ENCODE measurements at regions of chr12 and their contacts with region 1.

Region 1: DNA sequence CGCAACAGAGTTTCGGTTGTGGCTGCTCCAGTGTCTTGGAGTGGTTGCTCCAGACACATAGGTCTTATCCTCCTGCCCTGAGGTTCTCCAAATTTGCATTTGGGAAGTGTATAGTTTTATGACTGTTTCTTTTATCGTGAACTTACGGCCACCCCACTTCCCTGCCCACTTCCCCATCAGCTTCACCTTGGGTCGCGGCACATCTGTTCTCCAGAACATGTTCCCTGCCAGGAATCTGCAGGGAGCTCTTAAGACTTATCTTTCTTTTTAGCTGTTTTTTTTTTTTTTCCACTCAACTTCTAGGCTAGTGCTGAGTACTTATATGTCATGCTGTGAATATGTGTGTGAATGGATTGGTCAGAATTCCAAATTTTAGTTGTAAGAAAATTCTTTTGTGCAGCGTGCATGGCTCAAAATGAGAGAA is 75.4 kb downstream of the ETV6 start:
- DNase-seq: no peak
- H3K4me3 Mint-ChIP-seq: no peak overlapping the region
- H3K27ac Mint-ChIP-seq: no peak overlapping the region
- H3K4me1 Mint-ChIP-seq: peaks cover 50% of the 10 kb centered on the region
- H3K27me3 Mint-ChIP-seq: no peaks in the 10 kb centered on the region

Region 2: DNA sequence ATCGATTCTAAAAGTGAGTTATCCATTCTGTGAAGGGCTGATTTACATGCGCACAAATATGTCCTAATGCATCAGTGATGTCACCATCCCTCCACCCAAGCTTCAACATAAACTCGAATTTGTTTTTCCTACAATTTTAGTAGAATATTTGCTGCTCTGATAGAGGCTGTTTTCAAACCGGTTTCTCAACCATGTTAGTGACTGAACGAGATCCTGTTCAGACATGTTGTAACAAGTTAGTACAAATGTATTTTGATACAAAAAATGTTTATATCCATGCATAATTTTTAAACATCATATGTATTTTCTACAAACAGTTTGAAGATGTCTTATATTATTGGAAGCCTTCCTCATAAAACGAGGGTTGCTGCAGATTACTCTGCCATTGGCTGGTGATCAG is 316.8 kb before region 1 on chr12:
- CTCF ChIA-PET with region 1: no interaction called
- intact Hi-C with region 1: no loop called
- DNase-seq: no peak
- H3K4me3 Mint-ChIP-seq: no peak overlapping the region
- H3K27ac Mint-ChIP-seq: no peak overlapping the region
- H3K4me1 Mint-ChIP-seq: no peaks in the 10 kb centered on the region
- H3K27me3 Mint-ChIP-seq: no peaks in the 10 kb centered on the region

Region 3: GRCh38 chr12:11812586-11813427 is 87.9 kb after region 1 on chr12:
- CTCF ChIA-PET with region 1: no interaction called
- intact Hi-C with region 1: loop called (anchors 5 kb)
- DNase-seq: peak; percentile 39
- H3K4me3 Mint-ChIP-seq: peak overlapping the region; percentile 51
- H3K27ac Mint-ChIP-seq: peak overlapping the region; percentile 32
- H3K4me1 Mint-ChIP-seq: peaks cover 55% of the 10 kb centered on the region
- H3K27me3 Mint-ChIP-seq: no peaks in the 10 kb centered on the region